ENCODE measurements at regions of chr17 and their contacts with region 1.

Region 1: GRCh38 chr17:17496189-17497064 is at the start of gene RASD1:
- DNase-seq: peak; percentile 81
- H3K4me3 ChIP-seq: peak within 1 kb of the TSS; percentile 57 to 69 (median 57)
- H3K27ac ChIP-seq: no peak within 1 kb of the TSS
- H3K4me1 ChIP-seq: peaks cover 10% of the 10 kb centered on the region
- H3K27me3 ChIP-seq: peaks cover 5% of the 10 kb centered on the region
- CTCF ChIP-seq: peak; percentile 60 to 68
- total RNA-seq, gene RASD1: 1.8 TPM in 1 of 2 donors, not detected in the other

Region 2: DNA sequence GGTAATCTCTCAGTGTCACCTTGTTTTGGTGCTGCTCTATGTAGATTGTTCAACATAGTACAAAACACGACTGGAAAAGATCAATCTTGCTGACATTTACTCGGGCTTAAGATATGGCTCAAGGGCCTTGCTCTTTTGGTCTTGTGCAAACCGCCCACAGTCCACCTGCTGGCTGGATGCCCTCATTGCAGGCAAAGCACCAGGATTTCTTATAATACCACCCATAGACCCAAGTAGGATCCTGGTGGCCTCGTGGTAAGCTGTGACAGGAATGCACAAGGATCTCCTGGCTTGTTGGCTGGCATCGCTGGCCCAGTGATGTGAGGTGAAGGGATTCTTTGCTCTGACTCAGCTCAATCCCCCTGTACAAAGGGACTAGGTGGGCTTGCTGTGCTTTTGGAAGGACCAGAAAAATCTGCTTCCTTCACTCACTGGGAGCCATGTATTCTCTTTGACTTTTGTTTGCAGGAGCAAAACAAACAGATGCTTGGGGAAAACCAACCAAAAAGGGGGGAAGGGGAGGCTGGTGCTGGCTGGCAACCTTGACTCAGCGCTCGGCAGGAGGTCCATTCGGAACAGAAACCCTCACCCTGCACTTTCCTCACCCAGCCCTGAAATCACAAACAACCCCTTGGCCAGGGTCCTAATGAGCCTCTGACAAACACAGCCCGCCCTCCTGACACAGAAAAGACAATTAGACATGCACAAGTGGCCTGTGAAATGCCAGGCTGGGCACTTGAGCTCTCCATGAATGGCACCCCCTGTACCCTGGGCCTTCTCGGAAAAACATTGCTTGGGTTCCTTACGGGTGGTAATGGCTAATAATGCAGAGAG is 56.2 kb before region 1 on chr17:
- CTCF ChIA-PET with region 1: no interaction called
- dilution Hi-C with region 1: no loop called
- in situ Hi-C with region 1: no loop called
- intact Hi-C with region 1: no loop called
- DNase-seq: peak; percentile 23
- H3K4me3 ChIP-seq: no peak overlapping the region
- H3K27ac ChIP-seq: no peak overlapping the region
- H3K4me1 ChIP-seq: no peaks in the 10 kb centered on the region
- H3K27me3 ChIP-seq: no peaks in the 10 kb centered on the region
- CTCF ChIP-seq: peak; percentile 70 to 82

Region 3: GRCh38 chr17:17568749-17569195 is 72.3 kb after region 1 on chr17:
- CTCF ChIA-PET with region 1: interaction called, 3 read pairs
- dilution Hi-C with region 1: no loop called
- in situ Hi-C with region 1: loop called in 1 of 2 experiments (anchors 10 kb)
- intact Hi-C with region 1: loop called (anchors 1 kb)
- DNase-seq: peak; percentile 28
- H3K4me3 ChIP-seq: no peak overlapping the region
- H3K27ac ChIP-seq: no peak overlapping the region
- H3K4me1 ChIP-seq: no peaks in the 10 kb centered on the region
- H3K27me3 ChIP-seq: no peaks in the 10 kb centered on the region
- CTCF ChIP-seq: peak; percentile 75 to 92

Region 4: GRCh38 chr17:17613708-17614114 is 117.3 kb after region 1 on chr17:
- CTCF ChIA-PET with region 1: interaction called, 20 read pairs
- dilution Hi-C with region 1: no loop called
- in situ Hi-C with region 1: no loop called
- intact Hi-C with region 1: loop called (anchors 1 kb)
- DNase-seq: peak; percentile 62
- H3K4me3 ChIP-seq: no peak overlapping the region
- H3K27ac ChIP-seq: no peak overlapping the region
- H3K4me1 ChIP-seq: no peaks in the 10 kb centered on the region
- H3K27me3 ChIP-seq: no peaks in the 10 kb centered on the region
- CTCF ChIP-seq: peak; percentile 78 to 90

Region 5: DNA sequence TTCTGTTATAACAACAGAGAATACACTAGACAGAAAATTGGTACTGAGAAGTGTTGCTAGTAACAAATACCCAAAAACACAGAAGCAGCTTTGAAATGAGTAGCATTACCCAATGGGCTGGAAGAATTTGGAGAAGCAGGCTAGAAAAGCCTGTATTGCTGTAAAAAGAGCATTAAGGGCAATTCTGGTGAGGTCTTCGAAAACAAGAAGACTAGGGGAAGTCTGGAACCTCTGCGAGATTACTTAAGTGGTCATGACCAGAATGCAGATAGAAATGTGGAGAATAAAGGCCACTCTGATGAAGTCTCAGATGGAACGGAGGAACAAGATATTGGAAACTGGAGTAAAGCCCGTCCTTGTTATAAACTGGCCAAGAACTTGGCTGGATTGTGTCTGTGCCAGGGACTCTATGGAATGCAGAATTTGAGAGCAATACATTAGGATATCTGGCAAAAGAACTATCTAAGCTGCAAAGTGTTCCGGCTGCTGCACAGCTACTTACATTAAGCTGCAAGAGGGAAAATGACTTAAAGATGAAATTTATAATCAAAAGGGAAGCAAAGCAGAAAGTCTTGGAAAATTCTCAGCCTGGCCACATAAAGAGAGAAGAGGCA is 140.0 kb after region 1 on chr17:
- CTCF ChIA-PET with region 1: no interaction called
- dilution Hi-C with region 1: no loop called
- in situ Hi-C with region 1: loop called (anchors 10 kb)
- intact Hi-C with region 1: loop called (anchors 1 kb)
- DNase-seq: no peak
- H3K4me3 ChIP-seq: no peak overlapping the region
- H3K27ac ChIP-seq: no peak overlapping the region
- H3K4me1 ChIP-seq: peaks cover 10% of the 10 kb centered on the region
- H3K27me3 ChIP-seq: no peaks in the 10 kb centered on the region
- CTCF ChIP-seq: no peak

Region 6: DNA sequence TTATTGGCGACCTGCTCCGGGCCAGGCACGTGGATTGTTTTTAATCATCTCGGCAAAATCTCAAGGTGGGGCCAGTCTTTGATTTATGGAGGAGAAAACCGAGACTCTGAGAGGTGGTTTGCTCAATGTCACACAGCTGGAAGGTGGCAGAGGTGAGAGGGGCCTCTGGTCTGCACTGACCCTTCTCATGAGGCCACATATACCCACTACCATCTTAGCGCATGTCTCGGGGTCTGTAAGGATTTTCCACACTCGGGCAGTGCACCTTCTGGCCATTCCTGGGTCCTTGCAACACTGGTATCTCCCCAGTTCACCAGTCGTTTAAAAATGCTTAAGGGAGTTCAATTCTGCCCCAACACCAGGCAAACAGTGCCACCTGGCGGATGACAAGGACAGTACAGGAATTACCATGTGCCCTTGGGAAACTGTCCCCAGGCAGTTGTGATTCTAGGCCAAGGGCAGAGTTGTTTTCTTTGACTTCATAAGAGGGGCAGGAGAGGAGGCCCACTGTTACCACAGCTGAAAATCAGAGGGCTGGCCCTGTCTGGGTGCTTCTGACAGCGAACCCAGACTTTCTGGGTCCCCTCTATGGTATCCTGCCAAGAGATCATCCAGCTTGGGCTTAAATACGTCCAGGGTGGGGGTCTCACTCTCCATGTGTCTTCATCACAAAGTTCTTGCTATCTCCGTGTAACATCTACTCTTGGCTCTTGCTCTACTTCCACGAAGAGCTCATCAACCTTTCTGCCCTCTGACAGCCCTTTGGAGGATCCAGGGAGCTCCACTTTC is 145.4 kb after region 1 on chr17:
- CTCF ChIA-PET with region 1: no interaction called
- dilution Hi-C with region 1: no loop called
- in situ Hi-C with region 1: loop called (anchors 10 kb)
- intact Hi-C with region 1: loop called (anchors 1 kb)
- DNase-seq: peak; percentile 54
- H3K4me3 ChIP-seq: no peak overlapping the region
- H3K27ac ChIP-seq: no peak overlapping the region
- H3K4me1 ChIP-seq: peaks cover 3% of the 10 kb centered on the region
- H3K27me3 ChIP-seq: no peaks in the 10 kb centered on the region
- CTCF ChIP-seq: peak; percentile 85 to 90

Measured in mammary epithelial cell (primary cell).